ENCODE measurements at regions of chr11 and their contacts with region 1.

Region 1: GRCh38 chr11:95089620-95090542 is at the start of gene ENDOD1:
- H3K4me3 Mint-ChIP-seq: peak within 1 kb of the TSS; percentile 92
- H3K27ac Mint-ChIP-seq: peak within 1 kb of the TSS; percentile 92
- H3K4me1 Mint-ChIP-seq: peaks cover 26% of the 10 kb centered on the region
- H3K27me3 Mint-ChIP-seq: peaks cover 27% of the 10 kb centered on the region

Region 2: DNA sequence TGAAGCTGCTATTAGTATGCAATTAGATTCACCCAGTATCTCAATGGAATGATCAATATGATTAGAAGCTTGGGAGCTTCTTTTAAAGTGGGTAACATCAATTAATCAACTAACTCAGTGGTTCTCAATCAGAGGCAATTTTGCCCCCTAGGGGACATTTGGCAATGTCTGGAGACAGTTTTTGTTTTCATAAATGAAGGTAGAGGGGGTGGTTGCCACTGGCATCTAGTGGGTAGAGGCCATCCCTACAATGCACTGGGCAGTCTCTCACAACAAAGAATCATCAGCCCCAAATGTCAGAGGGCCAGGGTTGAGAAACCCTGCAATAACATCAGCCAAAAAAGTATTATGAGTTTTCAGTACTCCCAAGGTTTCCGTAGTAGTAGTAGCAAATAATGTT is 327.7 kb before region 1 on chr11:
- intact Hi-C with region 1: no loop called
- H3K4me3 Mint-ChIP-seq: no peak overlapping the region
- H3K27ac Mint-ChIP-seq: no peak overlapping the region
- H3K4me1 Mint-ChIP-seq: no peaks in the 10 kb centered on the region
- H3K27me3 Mint-ChIP-seq: no peaks in the 10 kb centered on the region

Region 3: DNA sequence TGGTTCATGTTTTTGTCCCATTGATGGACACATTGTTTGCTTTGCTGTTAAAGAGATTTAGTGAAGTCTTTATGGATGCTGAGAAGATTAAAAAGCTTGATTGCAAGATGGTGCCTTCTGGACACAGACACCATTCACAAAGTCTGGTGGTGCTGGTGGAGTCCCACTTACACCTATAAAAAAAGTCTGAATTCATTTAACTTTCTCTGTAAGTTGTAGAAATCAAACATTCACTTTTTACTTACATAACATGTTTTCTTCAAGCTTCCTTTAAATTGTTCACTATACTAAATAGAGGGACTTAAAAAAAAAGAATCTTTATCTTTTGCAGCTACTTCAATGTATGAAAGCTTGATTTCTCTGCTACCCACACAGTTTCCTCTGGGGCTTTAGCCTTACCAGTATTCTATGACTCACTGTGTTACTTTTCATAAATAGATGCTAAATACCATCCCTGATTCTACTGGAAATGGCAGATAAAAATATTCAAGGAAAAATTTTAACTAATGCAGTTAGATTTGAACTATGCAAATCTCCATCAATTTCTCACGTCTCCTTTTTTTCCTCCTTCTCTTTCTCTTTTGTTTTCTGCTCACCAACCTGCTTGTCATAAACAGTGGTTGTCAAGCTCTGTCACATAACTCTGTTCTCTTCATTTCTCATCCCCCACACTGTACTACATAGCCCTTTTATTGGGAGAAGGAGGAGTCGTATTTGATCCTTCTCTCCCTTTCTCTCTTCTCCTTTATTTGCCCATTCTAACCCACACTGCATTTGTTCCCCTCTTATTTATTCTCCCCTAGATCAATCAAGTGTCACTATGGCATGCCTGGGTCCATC is 610.0 kb after region 1 on chr11:
- intact Hi-C with region 1: loop called (anchors 5 kb)
- H3K4me3 Mint-ChIP-seq: peak overlapping the region; percentile 8
- H3K27ac Mint-ChIP-seq: peak overlapping the region; percentile 1
- H3K4me1 Mint-ChIP-seq: peaks cover 25% of the 10 kb centered on the region
- H3K27me3 Mint-ChIP-seq: no peaks in the 10 kb centered on the region